Activated CD8-positive, alpha-beta T cell treated with anti-CD3 and anti-CD28 coated beads for 36 hours (primary cell): ENCODE measurements at regions of chr4 and their contacts with region 1.

Region 1: GRCh38 chr4:81844717-81845116 is 373.0 kb upstream of the RASGEF1B start:
- DNase-seq: peak; percentile 88
- ATAC-seq: peak; percentile 97
- H3K4me3 Mint-ChIP-seq: no peak overlapping the region
- H3K27ac Mint-ChIP-seq: no peak overlapping the region
- H3K4me1 Mint-ChIP-seq: peaks cover 8% of the 10 kb centered on the region
- H3K27me3 Mint-ChIP-seq: no peaks in the 10 kb centered on the region
- CTCF ChIP-seq: peak; percentile 61

Region 2: DNA sequence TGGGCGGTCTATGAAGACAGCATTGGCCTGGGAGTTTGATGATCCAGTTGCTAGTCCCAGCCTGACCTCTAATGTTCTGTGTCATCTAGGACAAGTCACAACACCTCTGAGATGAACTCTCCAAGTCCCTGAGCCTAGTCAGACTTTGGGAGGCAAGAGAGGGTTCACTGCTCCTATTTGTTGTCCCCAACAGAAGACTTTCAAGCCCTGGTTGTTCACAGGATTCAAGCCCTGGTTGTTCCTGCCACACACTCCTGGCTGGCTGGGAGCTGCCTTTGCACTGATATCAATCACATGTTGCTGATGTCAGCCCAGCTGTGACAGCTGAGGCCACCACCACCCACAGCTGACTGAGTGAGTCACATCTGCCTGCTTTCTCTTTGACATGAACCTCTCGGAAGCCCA is 119.8 kb before region 1 on chr4:
- CTCF ChIA-PET with region 1: no interaction called
- POLR2A ChIA-PET with region 1: no interaction called
- intact Hi-C with region 1: loop called (anchors 10 kb)
- DNase-seq: peak; percentile 86
- ATAC-seq: peak; percentile 99
- H3K4me3 Mint-ChIP-seq: no peak overlapping the region
- H3K27ac Mint-ChIP-seq: no peak overlapping the region
- H3K4me1 Mint-ChIP-seq: peaks cover 19% of the 10 kb centered on the region
- H3K27me3 Mint-ChIP-seq: no peaks in the 10 kb centered on the region
- CTCF ChIP-seq: no peak

Region 3: GRCh38 chr4:81827577-81828202 is 17.0 kb before region 1 on chr4:
- CTCF ChIA-PET with region 1: interaction called, 15 read pairs
- POLR2A ChIA-PET with region 1: no interaction called
- intact Hi-C with region 1: no loop called
- DNase-seq: peak; percentile 66
- ATAC-seq: peak; percentile 95
- H3K4me3 Mint-ChIP-seq: no peak overlapping the region
- H3K27ac Mint-ChIP-seq: peak overlapping the region; percentile 63
- H3K4me1 Mint-ChIP-seq: peaks cover 18% of the 10 kb centered on the region
- H3K27me3 Mint-ChIP-seq: peaks cover 6% of the 10 kb centered on the region
- CTCF ChIP-seq: no peak

Region 4: GRCh38 chr4:82192017-82192673 is 347.4 kb after region 1 on chr4:
- CTCF ChIA-PET with region 1: no interaction called
- POLR2A ChIA-PET with region 1: no interaction called
- intact Hi-C with region 1: no loop called
- DNase-seq: no peak
- ATAC-seq: no peak
- H3K4me3 Mint-ChIP-seq: no peak overlapping the region
- H3K27ac Mint-ChIP-seq: no peak overlapping the region
- H3K4me1 Mint-ChIP-seq: no peaks in the 10 kb centered on the region
- H3K27me3 Mint-ChIP-seq: no peaks in the 10 kb centered on the region
- CTCF ChIP-seq: no peak